ENCODE measurements at regions of chr7 and their contacts with region 1.

Region 1: DNA sequence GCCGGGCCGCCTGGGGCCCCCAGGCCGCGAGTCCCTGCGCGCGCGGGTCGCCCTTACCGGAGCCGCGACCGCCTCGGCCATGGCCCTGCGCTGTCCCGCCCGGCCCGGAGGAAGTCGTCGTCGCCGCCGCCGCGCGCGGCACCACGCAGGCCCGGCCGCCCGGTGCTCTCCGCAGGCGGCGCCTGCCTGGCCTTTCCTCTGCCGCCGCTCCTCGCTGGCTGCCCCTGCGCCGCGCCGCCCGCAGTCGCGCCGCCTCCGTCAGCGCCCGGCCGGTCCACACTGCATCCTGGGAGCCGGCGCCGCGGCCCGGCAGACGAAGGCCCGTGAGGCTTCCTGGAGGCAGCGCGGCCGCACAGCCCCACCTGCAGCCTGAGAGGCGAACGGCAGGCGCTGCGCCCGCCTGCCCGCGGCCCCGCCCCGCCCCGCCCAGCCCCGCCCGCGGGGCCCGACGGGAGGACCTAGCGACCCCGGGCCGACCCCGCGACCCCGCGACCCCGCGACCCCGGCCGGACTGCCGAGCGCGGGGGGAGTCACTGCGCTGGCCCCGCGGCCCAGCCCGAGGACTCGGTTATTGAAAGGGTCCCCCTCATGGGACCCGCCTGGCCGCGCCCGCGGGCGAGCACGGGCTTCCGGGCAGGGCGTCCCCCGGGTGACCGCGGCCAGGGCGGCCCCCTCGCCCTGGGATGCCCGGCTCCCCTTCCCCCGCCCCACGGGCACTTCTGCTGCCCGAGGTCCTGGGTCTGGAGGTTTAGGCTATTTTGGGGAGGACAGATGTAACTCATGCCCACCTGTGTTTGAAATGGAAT is at the start of gene ZNF746:
- DNase-seq: peak; percentile 69 to 78
- ATAC-seq: peak; percentile 90 to 91
- H3K4me3 ChIP-seq: peak within 1 kb of the TSS; percentile 77 to 92 (median 82)
- H3K27ac ChIP-seq: peak within 1 kb of the TSS; percentile 76 to 86 (median 84)
- H3K4me1 ChIP-seq: peaks cover 16 to 19% of the 10 kb centered on the region in 2 donors
- H3K27me3 ChIP-seq: no peaks in the 10 kb centered on the region
- CTCF ChIP-seq: peak in 4 of 5 experiments; percentile 72 to 85 (median 81)
- POLR2A ChIP-seq: peak; percentile 49 to 67
- total RNA-seq, gene ZNF746: 12.4 to 17.4 (median 15.7) TPM

Region 2: DNA sequence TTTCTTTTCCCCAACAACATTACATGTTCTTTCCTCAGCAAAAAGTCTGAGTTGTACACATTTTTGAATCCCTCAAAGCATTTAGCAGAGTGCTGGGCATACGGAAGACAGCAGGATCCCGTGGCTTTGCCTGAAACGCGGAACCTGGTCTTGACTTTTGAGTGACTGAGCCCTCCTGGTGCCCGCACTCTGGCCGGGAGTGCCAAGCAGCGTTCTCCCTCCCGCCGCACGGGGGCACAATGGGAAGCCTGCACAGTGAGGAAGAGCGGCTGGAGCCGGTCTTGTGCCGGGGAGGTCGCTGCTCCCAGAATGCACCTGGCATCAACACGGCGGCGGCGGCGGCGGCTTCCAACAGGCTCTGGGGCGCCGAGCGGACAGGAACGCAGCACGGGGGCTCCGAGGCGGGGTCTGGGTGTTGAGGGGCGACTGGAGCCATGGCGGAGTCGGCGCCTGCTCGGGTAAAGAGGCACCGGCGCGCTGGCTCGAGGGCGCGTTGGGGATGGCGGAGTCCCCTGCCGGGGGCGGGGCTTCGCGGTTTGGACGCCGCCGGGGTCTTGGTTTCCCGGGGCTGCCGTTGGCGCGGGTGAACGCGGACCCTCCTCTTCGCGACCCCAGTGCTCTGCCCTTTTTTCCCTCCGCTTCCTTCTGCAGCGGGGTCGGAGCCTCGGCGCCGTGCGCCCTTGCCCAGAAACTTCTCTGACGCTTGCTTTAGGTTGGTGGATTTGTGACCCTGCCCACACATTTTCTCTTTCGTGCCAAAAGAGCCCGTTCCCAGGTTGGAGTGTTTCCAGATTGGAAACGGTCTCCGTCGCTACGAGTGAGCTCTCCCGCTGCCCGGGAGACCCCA is 258.1 kb before region 1 on chr7 and contains the start of gene ZNF212:
- in situ Hi-C with region 1: no loop called
- intact Hi-C with region 1: loop called (anchors 5 kb)
- DNase-seq: peak; percentile 85 to 90
- ATAC-seq: peak; percentile 91 to 99
- H3K4me3 ChIP-seq: peak within 1 kb of the TSS; percentile 65 to 98 (median 90)
- H3K27ac ChIP-seq: peak within 1 kb of the TSS; percentile 82 to 91 (median 86)
- H3K4me1 ChIP-seq: peaks cover 21% of the 10 kb centered on the region in 2 donors
- H3K27me3 ChIP-seq: no peaks in the 10 kb centered on the region
- CTCF ChIP-seq: peak; percentile 84 to 90 (median 86)
- POLR2A ChIP-seq: peak in 1 of 2 donors; percentile 34
- total RNA-seq, gene ZNF212: 3.7 to 7.5 (median 4.7) TPM

Region 3: GRCh38 chr7:149261829-149262617 is 235.6 kb before region 1 on chr7 and contains the start of gene ZNF783:
- in situ Hi-C with region 1: loop called in 1 of 4 experiments (anchors 25 kb)
- intact Hi-C with region 1: loop called (anchors 5 kb)
- DNase-seq: peak; percentile 71 to 84
- ATAC-seq: peak; percentile 92 to 94
- H3K4me3 ChIP-seq: peak within 1 kb of the TSS; percentile 59 to 83 (median 62)
- H3K27ac ChIP-seq: peak within 1 kb of the TSS; percentile 76 to 92 (median 85)
- H3K4me1 ChIP-seq: peaks cover 12 to 18% of the 10 kb centered on the region in 2 donors
- H3K27me3 ChIP-seq: no peaks in the 10 kb centered on the region
- CTCF ChIP-seq: peak; percentile 73 to 96 (median 94)
- POLR2A ChIP-seq: peak; percentile 64 to 66
- total RNA-seq, gene ZNF783: 3.4 to 7.1 (median 5.5) TPM

Region 4: DNA sequence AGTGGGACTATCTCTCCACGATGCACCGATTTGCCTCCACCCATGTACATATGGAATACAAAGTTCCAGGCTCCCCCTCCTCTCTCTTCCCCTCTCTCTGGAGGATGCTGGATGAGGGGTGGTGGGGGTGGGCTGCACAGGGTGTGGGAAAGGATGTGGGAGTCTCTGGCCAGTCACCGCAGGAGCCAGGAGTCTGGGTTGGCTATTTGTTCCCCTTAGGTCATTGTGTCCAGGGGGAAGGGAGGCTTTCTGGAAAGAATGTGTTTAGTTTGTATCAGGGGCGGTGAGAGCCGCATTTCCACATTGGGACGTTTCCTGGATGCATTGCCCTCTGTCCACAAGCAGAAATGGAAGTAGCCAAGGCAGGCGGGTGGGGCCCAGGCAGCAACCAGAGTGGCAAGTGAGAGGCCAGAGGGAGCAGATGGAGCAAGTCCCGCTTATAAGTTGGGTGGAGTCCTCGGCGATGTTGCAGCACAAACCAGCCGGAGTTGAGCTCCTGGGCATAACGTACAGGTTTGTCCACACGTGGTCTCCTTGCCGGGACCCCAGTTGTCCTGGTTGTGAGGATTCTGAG is 100.1 kb before region 1 on chr7:
- in situ Hi-C with region 1: no loop called
- intact Hi-C with region 1: no loop called
- DNase-seq: no peak
- ATAC-seq: no peak
- H3K4me3 ChIP-seq: no peak overlapping the region
- H3K27ac ChIP-seq: no peak overlapping the region
- H3K4me1 ChIP-seq: no peaks in the 10 kb centered on the region
- H3K27me3 ChIP-seq: no peaks in the 10 kb centered on the region
- CTCF ChIP-seq: no peak
- POLR2A ChIP-seq: no peak

Region 5: GRCh38 chr7:149422129-149422913 is 75.3 kb before region 1 on chr7:
- in situ Hi-C with region 1: no loop called
- intact Hi-C with region 1: loop called (anchors 2 kb)
- DNase-seq: peak in 1 of 2 donors; percentile 26
- ATAC-seq: peak; percentile 83 to 88
- H3K4me3 ChIP-seq: peak overlapping the region; percentile 49 to 67 (median 54)
- H3K27ac ChIP-seq: no peak overlapping the region
- H3K4me1 ChIP-seq: peaks cover 0 to 8% of the 10 kb centered on the region in 2 donors
- H3K27me3 ChIP-seq: peaks cover 0 to 9% (median 0%) of the 10 kb centered on the region in 3 donors
- CTCF ChIP-seq: peak; percentile 21 to 70 (median 60)
- POLR2A ChIP-seq: no peak

Region 6: DNA sequence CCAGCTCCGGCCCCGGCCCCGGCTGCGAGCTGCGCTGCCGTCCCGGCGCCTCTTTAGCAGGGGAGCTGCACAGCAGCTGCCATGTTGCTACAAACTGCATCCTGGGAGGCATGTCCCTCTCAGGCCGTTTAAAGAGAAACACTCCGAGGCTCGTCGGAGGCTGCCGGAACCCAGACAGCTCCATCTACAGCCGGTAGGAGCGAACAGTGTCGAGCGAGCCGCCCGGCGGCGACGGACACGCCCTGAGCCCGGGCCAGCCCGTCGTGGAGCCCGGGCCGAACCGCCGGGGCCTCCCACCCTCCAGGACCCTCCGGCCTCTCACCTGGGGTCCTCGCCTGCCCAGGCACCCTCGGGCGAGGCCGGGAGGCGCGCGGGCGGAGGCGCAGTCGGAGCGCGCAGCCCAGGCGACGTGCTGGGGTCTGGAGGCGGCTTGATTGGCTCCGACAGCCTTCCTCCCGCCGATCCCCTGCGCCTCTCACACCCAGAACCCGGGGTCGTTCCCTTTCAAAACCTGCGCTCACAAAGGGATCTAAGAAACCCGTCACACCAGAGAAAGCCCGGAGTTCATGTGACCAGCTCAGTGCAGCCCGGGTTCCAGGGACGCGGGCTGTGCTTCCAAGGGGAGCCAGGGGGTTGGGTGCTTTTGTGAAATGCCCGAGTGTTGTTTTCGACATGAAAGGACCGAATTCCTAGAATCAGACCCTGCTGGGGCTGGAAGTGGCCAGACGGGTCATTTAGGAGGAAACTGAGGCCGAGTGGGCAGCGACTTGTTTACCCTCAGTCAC is 37.0 kb before region 1 on chr7 and contains the start of gene ZNF777:
- in situ Hi-C with region 1: no loop called
- intact Hi-C with region 1: loop called (anchors 1 kb)
- DNase-seq: peak; percentile 70 to 80
- ATAC-seq: peak; percentile 97 to 98
- H3K4me3 ChIP-seq: peak within 1 kb of the TSS; percentile 60 to 93 (median 74)
- H3K27ac ChIP-seq: peak within 1 kb of the TSS; percentile 50 to 77 (median 72)
- H3K4me1 ChIP-seq: peaks cover 14 to 15% of the 10 kb centered on the region in 2 donors
- H3K27me3 ChIP-seq: no peaks in the 10 kb centered on the region
- CTCF ChIP-seq: peak; percentile 22 to 51 (median 39)
- POLR2A ChIP-seq: no peak
- total RNA-seq, gene ZNF777: 7.6 to 17.6 (median 15.1) TPM

Region 7: DNA sequence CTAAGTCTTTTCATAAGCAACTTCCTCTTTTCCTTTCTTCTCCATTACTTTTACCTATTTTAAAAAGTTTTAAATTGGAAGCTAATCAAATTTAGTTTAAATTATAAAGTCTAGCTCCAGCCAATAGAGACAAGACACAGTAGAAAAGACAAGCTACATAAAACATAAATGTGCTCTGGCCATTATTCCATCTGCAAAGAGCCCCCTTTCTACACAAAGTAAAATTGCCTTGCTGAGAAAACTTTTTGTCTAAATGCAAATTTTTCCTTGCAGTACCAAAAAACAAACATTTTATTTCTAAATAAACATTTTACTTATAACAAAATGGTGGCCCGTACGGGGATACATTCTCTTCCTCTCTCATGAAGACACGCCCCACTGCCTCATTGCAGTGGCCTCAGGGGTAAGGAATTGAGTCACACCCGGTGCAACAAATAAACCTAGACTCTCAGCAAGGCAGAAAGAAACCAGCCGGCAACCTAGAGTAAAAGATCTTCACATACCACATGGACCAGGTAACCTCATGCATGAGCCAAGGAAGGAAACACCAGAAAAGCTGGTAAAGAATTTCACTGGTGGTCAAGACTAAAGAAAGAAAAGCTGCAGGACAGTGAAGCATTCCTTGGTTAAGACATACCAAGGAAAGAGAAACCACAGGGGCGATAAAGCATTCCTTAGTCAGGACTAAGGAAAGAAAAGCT is 71.5 kb after region 1 on chr7:
- in situ Hi-C with region 1: no loop called
- intact Hi-C with region 1: no loop called
- DNase-seq: no peak
- ATAC-seq: no peak
- H3K4me3 ChIP-seq: no peak overlapping the region
- H3K27ac ChIP-seq: no peak overlapping the region
- H3K4me1 ChIP-seq: peaks cover 0 to 14% of the 10 kb centered on the region in 2 donors
- H3K27me3 ChIP-seq: no peaks in the 10 kb centered on the region
- CTCF ChIP-seq: no peak
- POLR2A ChIP-seq: no peak

Region 8: DNA sequence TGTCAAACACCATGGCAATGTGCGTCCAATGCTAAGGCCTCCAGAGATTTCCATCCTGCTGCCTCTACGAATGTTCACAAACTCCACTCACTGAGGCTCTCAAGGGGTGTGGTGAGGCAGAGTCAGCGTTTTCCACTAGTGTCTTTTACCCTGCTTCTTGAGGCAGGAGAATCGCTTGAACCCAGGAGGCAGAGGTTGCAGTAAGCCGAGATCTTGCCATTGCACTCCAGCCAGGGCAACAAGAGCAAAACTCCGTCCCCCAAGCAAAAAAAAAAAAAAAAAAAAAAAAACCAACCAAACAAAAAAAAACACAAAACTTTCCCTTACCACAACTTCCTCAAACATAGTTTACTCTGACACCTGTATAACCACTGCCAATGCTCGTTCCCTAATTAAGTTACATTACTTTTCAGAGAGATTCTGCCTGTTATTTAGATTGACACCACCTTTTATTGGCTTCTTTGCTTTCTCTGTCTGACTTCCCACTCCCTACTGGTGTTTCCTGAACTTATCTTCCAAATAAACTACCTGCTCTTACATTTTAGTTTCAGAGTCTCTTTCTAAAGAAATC is 102.1 kb after region 1 on chr7:
- in situ Hi-C with region 1: no loop called
- intact Hi-C with region 1: no loop called
- DNase-seq: no peak
- ATAC-seq: no peak
- H3K4me3 ChIP-seq: no peak overlapping the region
- H3K27ac ChIP-seq: no peak overlapping the region
- H3K4me1 ChIP-seq: no peaks in the 10 kb centered on the region
- H3K27me3 ChIP-seq: no peaks in the 10 kb centered on the region
- CTCF ChIP-seq: no peak
- POLR2A ChIP-seq: no peak

Region 9: DNA sequence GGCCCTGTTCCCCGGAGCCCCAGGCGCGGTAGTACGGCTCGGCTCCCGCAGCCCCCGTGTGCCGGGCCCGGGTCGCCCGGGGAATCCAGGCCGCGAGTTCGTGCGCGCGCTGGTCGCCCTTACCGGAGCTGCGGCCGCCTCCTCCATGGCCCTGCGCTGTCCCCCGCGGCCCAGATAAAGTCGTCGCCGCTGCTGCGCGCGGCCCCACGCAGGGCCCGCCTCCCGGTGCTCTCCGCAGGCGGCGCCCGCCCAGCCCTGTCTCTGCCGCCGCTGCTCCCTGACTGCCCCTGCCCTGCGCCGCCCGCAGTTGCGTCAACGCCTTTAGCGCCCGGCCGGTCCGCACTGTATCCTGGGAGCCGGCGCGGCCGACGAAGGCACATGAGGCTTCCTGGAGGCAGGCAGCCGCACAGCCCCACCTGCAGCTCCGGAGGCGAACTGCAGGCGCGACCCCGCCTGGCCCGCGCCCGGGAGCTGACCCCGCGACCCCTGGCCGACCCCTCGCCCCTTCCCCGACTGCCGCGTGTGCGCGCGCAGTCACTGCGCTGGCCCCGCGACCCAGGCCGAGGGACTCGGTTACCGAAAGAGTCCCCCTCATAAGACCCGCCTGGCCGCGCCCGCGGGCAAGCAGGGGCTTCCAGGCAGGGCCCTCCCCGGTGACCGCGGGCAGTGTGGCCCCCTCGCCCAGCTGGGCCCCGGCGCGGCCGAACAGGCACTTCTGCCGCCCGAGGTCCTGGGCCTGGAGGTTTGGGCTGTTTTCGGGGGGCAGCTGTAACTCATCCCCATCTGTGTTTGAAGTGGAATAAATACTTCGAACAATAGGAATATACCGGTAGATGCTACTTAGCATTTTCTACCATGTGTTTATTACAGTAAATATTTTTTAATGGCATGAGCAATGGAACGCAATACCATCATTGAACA is 127.0 kb after region 1 on chr7:
- in situ Hi-C with region 1: no loop called
- intact Hi-C with region 1: loop called (anchors 5 kb)
- DNase-seq: peak; percentile 87 to 92
- ATAC-seq: peak; percentile 90 to 92
- H3K4me3 ChIP-seq: peak overlapping the region; percentile 86 to 96 (median 90)
- H3K27ac ChIP-seq: peak overlapping the region; percentile 78 to 91 (median 90)
- H3K4me1 ChIP-seq: peaks cover 16 to 27% of the 10 kb centered on the region in 2 donors
- H3K27me3 ChIP-seq: no peaks in the 10 kb centered on the region
- CTCF ChIP-seq: peak; percentile 86 to 99 (median 96)
- POLR2A ChIP-seq: peak; percentile 76 to 83